ENCODE measurements at regions of chr10 and their contacts with region 1.

Region 1: DNA sequence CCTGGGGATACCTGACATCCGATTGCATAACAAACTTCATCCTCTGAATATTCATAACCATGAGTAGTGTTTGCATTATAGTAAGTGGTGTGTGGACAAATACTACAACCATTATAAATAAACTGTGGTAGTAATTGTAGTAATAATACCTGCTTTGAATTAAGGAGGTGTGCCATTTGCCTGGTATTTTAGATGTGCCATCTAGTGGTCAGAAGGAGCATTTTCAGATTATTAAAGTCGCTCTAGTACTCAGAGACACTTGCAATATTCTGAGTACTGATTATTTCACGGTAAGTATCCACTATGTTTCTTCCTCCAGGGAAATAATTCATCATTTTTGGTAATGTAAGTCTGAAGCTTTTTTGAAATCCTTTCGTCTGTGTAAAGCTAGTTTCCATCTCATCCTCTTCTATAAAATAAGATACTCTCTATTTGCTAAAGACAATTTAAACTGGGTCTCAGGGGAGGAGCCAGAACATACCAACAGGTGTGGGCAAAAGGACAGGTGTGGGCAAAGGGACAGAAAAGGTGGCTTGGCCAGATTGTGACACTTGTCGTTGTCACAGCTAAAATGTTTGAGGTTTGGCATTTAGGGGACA is 115.3 kb upstream of the WDR11 start:
- DNase-seq: no peak
- ATAC-seq: no peak
- H3K4me3 ChIP-seq: no peak overlapping the region
- H3K27ac ChIP-seq: no peak overlapping the region
- H3K4me1 ChIP-seq: no peaks in the 10 kb centered on the region
- H3K27me3 ChIP-seq: peaks cover 0 to 20% (median 13%) of the 10 kb centered on the region in 7 donors
- CTCF ChIP-seq: peak; percentile 22 to 69 (median 54)

Region 2: DNA sequence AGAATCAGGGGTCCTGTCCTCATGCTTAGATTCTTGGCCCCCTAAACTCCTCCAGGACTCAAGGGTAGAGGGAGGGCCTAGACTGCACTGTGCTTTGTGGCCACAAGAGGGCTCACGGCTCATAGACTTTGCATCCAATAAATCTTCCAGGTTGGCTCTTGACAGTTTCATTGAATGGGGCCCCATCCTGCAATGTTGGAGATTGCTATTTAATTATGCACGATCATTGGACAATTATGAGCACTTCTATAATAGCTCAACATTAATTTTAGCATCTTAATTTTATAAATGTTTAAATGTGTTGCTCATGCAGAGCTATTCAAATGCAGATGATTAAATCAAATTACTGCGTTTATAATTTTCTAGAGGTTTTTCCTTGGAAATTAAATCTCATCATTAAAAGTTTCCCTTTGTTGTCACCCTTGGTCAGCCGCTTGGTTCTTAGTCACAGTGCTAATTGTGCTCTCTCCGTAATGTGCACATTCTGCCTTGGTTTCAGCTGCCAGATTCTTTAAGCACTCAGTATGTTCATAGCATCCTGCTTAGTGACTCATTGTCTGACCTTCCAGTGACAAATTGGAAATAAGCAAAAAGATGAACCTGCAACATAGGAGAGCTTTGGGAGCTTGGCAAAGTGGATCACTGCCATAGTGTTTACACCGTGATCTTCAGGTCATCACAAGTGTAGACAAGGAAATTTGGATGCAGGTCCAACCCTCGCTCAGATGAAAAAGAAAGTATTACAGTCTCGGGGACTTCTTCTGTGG is 312.3 kb before region 1 on chr10:
- intact Hi-C with region 1: loop called in 2 of 10 experiments (anchors 5 kb)
- DNase-seq: peak; percentile 6 to 12
- ATAC-seq: no peak
- H3K4me3 ChIP-seq: no peak overlapping the region
- H3K27ac ChIP-seq: no peak overlapping the region
- H3K4me1 ChIP-seq: no peaks in the 10 kb centered on the region
- H3K27me3 ChIP-seq: peaks cover 0 to 9% (median 0%) of the 10 kb centered on the region in 7 donors
- CTCF ChIP-seq: peak; percentile 26 to 78 (median 68)